ENCODE measurements at regions of chr16 and their contacts with region 1.

Region 1: GRCh38 chr16:75110637-75111513 is 5.7 kb downstream of the LDHD start:
- DNase-seq: peak; percentile 92
- H3K4me3 Mint-ChIP-seq: peak overlapping the region; percentile 55
- H3K27ac Mint-ChIP-seq: peak overlapping the region; percentile 75
- H3K4me1 Mint-ChIP-seq: peaks cover 46% of the 10 kb centered on the region
- H3K27me3 Mint-ChIP-seq: peaks cover 12% of the 10 kb centered on the region

Region 2: DNA sequence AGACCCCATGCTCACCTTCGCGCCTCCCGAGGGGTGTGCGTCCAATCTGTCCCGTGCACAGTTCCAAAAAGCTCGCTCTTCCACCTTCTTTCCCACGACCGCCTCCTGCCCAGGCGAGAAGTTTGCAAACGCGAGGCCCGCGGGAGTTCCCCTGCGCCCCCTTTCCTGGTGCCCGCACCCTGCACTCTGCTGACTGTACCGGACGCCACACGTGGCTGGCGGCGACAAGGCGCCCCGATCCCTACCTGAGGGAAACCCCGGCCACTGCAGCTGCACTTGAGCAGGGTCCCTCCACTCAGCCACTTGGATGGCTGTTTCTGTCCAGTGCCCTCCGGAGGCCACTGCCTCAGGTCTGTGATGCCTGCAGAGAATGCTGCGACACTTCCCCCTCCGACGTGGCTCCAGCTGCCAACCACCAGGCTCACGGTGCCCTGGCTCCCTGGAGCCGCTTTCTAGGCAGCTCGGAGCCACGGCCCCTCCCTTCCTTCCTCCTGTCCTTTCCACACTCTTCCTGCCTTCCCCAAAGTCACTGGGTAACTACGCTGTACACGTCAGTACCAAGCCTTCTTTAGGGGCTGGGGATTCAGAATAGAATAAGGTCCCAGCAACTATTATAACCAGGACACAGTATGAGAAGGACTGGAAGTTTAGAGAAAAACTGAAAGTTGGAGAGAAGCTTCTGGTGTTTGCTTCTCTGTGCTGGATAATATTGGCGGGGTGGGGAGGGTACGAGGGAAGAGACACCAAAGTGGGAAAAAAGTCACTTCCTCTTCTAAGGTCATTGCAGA is 410.2 kb before region 1 on chr16 and contains the start of gene MLKL:
- CTCF ChIA-PET with region 1: no interaction called
- intact Hi-C with region 1: loop called (anchors 2 kb)
- DNase-seq: peak; percentile 71
- H3K4me3 Mint-ChIP-seq: peak within 1 kb of the TSS; percentile 93
- H3K27ac Mint-ChIP-seq: peak within 1 kb of the TSS; percentile 96
- H3K4me1 Mint-ChIP-seq: peaks cover 61% of the 10 kb centered on the region
- H3K27me3 Mint-ChIP-seq: no peaks in the 10 kb centered on the region
- total RNA-seq, gene MLKL: 10.7 to 12.0 TPM

Region 3: DNA sequence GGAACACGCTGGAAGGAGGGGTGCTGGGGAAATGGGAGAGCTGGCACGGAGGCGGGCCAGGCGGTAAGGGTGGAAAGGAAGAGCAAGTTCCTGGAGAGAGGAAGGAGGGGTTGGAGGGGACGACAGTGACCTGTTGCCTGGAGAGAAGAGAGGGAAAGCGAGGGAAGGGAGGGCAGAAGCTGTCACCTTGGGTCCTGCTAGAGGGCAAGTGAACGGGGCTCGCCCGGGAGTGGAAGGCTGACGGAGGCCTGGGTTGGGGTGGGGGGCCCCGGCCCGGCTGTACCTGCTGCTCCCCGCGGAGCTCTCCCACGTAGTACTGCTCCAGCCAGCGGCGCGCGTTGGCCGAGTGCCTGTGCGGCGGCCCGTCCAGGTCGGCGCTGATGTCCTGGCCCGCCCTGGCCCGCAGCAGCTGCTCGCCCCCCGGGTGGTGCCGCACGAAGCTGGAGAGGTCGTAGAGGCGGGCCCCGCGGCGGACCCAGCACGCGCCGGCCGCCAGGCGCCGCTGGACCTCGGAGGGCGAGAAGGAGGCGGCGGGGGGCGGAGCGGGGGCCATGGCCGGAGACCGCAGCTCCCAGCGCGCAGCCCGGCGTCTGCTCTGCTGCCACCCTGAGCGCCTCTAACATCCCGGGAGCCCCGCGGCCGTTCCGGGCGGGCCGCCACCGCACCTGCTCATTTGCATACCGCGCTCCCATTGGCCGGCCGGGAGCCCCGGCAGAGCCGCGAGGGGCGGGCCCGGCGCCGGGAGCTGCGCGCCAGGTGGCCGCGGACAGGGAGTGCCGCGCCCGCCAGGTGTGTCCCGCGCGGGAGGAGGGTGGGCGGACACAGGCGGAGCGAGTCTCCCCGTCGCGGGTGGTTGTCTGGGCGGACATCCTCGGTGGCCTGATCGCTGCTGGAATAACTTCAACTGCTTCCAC is 336.4 kb before region 1 on chr16 and contains the start of gene FA2H:
- CTCF ChIA-PET with region 1: no interaction called
- intact Hi-C with region 1: no loop called
- DNase-seq: peak; percentile 79
- H3K4me3 Mint-ChIP-seq: peak within 1 kb of the TSS; percentile 62
- H3K27ac Mint-ChIP-seq: no peak within 1 kb of the TSS
- H3K4me1 Mint-ChIP-seq: peaks cover 12% of the 10 kb centered on the region
- H3K27me3 Mint-ChIP-seq: peaks cover 33% of the 10 kb centered on the region
- total RNA-seq, gene FA2H: 0.15 TPM in 1 of 2 experiments, not detected in the other

Region 4: GRCh38 chr16:74813109-74813641 is 297.7 kb before region 1 on chr16:
- CTCF ChIA-PET with region 1: interaction called, 3 read pairs
- intact Hi-C with region 1: loop called (anchors 1 kb)
- DNase-seq: peak; percentile 84
- H3K4me3 Mint-ChIP-seq: no peak overlapping the region
- H3K27ac Mint-ChIP-seq: no peak overlapping the region
- H3K4me1 Mint-ChIP-seq: peaks cover 3% of the 10 kb centered on the region
- H3K27me3 Mint-ChIP-seq: no peaks in the 10 kb centered on the region

Region 5: DNA sequence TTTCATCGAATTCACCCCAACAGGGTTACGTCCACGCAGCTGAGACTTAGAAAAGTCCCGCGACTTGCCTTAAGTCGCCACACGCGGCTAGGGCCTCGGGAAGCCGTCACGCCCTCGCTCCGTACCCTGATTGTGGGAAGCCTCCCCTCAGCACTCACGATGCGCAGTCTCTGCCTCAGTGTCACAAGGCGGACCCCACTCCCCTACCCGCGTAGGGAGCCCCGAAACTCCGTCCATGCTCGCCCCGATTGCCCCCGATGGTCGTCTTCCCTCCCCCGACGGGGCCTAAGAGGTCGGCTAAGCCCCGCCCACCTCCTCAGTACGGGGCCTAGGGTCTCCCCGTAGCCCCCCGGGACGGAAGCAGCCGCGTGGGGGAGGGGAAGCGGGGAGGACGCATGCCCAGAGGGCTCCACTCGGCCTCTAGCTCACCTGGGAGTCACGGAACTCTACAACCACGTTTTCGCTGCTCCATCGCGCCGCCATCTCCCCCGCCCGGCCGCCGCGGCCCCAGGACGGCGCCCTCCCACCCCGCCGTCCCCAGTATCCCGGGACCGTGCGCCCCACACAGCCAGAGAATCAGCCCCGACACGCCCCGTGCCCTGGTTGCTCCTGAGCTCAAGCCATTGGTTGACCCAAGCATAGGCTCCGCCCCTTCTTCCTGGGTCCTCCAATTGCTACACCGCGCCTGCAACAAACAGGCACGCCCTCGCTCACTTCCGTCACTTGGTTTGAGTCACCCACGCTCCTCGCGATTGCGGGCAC is 126.2 kb before region 1 on chr16 and contains the start of gene WDR59:
- CTCF ChIA-PET with region 1: interaction called, 27 read pairs
- intact Hi-C with region 1: loop called (anchors 1 kb)
- DNase-seq: peak; percentile 100
- H3K4me3 Mint-ChIP-seq: peak within 1 kb of the TSS; percentile 88
- H3K27ac Mint-ChIP-seq: peak within 1 kb of the TSS; percentile 73
- H3K4me1 Mint-ChIP-seq: peaks cover 16% of the 10 kb centered on the region
- H3K27me3 Mint-ChIP-seq: no peaks in the 10 kb centered on the region
- total RNA-seq, gene WDR59: 47.8 to 55.6 TPM

Region 6: GRCh38 chr16:75011634-75012307 is 99.1 kb before region 1 on chr16:
- CTCF ChIA-PET with region 1: interaction called, 34 read pairs
- intact Hi-C with region 1: loop called (anchors 1 kb)
- DNase-seq: peak; percentile 86
- H3K4me3 Mint-ChIP-seq: peak overlapping the region; percentile 62
- H3K27ac Mint-ChIP-seq: peak overlapping the region; percentile 95
- H3K4me1 Mint-ChIP-seq: peaks cover 48% of the 10 kb centered on the region
- H3K27me3 Mint-ChIP-seq: no peaks in the 10 kb centered on the region

Region 7: DNA sequence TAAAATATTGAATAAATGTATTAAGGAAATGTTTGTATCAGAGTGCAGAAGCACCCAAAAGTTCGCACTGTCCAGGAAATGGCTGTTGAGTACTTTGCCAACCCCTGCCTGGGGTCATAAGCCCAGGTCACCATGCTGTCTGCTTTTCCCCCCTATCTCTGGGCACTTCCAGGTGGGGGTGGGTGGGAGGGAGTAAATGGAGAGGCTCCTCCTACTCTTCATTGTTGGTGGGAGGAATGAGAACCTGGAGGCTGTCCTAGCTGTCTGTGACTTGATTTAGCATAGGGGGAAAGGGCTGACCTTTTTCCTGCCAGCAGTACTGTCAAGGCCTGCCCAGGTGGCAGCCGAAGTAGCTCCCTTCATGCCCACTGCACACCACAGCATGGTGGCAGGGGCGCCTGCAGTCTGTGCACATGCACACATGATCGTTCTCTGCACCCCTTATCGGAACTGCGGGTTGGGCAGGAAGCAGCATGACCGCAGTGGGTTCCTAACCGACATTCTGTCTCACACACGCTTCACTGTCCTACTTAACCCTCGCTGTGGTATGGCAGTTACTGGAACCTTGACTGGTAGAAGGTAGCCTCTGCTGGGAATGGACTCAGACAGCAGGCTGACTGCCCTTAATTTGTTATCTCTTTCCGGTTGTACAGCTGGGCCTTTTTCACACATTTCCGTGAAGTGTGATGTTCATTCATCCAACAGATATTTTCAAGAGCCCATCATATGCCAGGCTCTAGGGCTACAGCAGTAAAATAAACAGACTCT is 35.8 kb before region 1 on chr16:
- CTCF ChIA-PET with region 1: interaction called, 7 read pairs
- intact Hi-C with region 1: loop called (anchors 1 kb)
- DNase-seq: peak; percentile 93
- H3K4me3 Mint-ChIP-seq: peak overlapping the region; percentile 34
- H3K27ac Mint-ChIP-seq: peak overlapping the region; percentile 85
- H3K4me1 Mint-ChIP-seq: peaks cover 40% of the 10 kb centered on the region
- H3K27me3 Mint-ChIP-seq: no peaks in the 10 kb centered on the region

Region 8: GRCh38 chr16:75121949-75122568 is 11.2 kb after region 1 on chr16:
- CTCF ChIA-PET with region 1: interaction called, 15 read pairs
- intact Hi-C with region 1: no loop called
- DNase-seq: no peak
- H3K4me3 Mint-ChIP-seq: no peak overlapping the region
- H3K27ac Mint-ChIP-seq: no peak overlapping the region
- H3K4me1 Mint-ChIP-seq: no peaks in the 10 kb centered on the region
- H3K27me3 Mint-ChIP-seq: no peaks in the 10 kb centered on the region

Region 9: DNA sequence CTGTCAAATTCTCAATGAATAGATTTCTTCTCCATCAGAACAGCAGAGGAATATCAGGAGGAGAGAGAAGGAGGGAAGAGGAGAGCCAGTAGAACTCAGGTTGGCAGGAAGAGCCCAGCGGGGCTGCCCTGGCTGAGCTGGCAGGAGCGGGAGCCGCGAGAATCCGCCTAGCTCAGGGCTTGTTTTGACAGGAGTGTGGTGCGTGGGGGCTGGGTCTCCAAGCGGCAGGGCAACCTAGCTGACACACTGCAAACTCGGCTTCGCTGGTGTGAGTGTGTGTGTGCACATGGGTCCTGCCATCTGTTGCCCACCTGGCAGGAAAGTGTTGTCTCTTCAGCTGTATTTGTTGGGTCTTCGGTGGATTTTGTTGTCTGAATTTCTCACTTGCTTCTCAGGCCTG is 168.4 kb after region 1 on chr16:
- CTCF ChIA-PET with region 1: no interaction called
- intact Hi-C with region 1: no loop called
- DNase-seq: no peak
- H3K4me3 Mint-ChIP-seq: no peak overlapping the region
- H3K27ac Mint-ChIP-seq: no peak overlapping the region
- H3K4me1 Mint-ChIP-seq: peaks cover 2% of the 10 kb centered on the region
- H3K27me3 Mint-ChIP-seq: peaks cover 8% of the 10 kb centered on the region